Heart right ventricle (tissue), 16 donors: ENCODE measurements at regions of chr16 and their contacts with region 1.

Region 1: GRCh38 chr16:21184834-21185233 is 26.4 kb downstream of the LDAF1 start:
- DNase-seq: no peak
- ATAC-seq: no peak
- H3K4me3 ChIP-seq: no peak overlapping the region
- H3K27ac ChIP-seq: no peak overlapping the region
- H3K4me1 ChIP-seq: peaks cover 0 to 8% (median 0%) of the 10 kb centered on the region in 9 donors
- H3K27me3 ChIP-seq: no peaks in the 10 kb centered on the region
- CTCF ChIP-seq: no peak

Region 2: GRCh38 chr16:20833086-20833485 is 351.7 kb before region 1 on chr16:
- intact Hi-C with region 1: no loop called
- DNase-seq: no peak
- ATAC-seq: peak in 3 of 8 donors; percentile 47 to 73 (median 71)
- H3K4me3 ChIP-seq: no peak overlapping the region
- H3K27ac ChIP-seq: no peak overlapping the region
- H3K4me1 ChIP-seq: peaks cover 0 to 19% (median 0%) of the 10 kb centered on the region in 9 donors
- H3K27me3 ChIP-seq: no peaks in the 10 kb centered on the region
- CTCF ChIP-seq: no peak

Region 3: DNA sequence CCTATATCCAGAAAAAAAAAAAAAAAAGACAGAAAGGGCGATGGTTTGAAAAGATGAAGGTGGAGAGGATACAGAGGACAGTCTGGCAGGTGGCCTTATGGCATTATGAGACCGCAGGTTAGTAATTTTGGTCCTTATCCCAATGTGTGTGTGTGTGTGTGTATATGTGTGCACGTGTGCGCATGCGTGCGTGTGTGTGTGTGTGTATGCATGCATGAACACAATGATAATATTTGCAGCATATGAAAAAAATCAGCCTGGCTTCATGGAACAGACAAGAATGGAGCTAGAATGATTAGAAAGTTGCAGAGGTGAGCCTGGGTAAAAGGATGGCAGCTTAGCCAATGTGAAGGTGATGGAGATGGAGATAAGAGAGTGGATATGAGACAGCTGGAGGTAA is 200.8 kb before region 1 on chr16:
- intact Hi-C with region 1: no loop called
- DNase-seq: no peak
- ATAC-seq: no peak
- H3K4me3 ChIP-seq: no peak overlapping the region
- H3K27ac ChIP-seq: no peak overlapping the region
- H3K4me1 ChIP-seq: no peaks in the 10 kb centered on the region
- H3K27me3 ChIP-seq: no peaks in the 10 kb centered on the region
- CTCF ChIP-seq: no peak

Region 4: GRCh38 chr16:21056396-21056795 is 128.4 kb before region 1 on chr16:
- intact Hi-C with region 1: no loop called
- DNase-seq: no peak
- ATAC-seq: no peak
- H3K4me3 ChIP-seq: no peak overlapping the region
- H3K27ac ChIP-seq: no peak overlapping the region
- H3K4me1 ChIP-seq: no peaks in the 10 kb centered on the region
- H3K27me3 ChIP-seq: peaks cover 0 to 3% (median 0%) of the 10 kb centered on the region in 7 donors
- CTCF ChIP-seq: no peak

Region 5: DNA sequence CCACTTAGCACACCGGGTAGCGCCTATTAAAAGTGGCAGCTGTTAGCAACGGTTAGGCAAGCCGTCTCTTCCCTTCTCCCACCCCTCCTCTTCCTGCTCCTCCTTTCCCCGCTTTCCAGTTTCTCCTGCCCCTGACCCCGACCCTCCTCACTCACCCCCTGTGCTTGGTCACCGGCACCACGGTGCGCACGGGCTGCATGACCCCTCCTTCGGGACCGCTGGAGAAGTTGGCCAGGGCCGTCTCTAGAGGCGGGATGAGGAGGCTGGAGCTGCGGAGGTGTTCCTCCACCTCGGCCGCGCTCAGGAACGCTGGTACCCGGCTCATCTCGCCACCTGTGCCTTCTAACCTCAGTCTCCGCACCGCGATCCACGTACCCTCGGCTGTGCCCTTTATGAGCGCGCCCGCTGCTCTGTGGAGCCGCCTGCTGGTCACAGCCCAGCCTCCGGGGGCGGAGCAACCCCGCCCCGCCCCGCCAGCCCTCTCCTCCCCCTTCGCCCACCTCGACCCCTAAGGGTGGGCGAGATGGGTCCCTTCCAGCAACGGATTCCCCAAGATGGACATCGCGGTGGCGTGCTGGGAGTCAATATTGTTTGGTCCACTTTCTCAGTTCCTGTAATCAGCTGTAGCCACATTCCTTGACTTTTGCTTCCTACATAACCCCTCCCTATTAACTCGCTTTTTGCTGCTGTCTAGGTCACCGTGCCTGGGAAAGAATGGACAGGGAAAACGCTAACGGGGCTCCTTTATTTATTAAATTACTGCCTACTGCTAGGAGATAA is 93.3 kb after region 1 on chr16 and contains the start of gene CRYM:
- intact Hi-C with region 1: loop called in 2 of 10 experiments (anchors 5 to 10 kb)
- DNase-seq: peak; percentile 55 to 75
- ATAC-seq: peak; percentile 91 to 97 (median 96)
- H3K4me3 ChIP-seq: peak within 1 kb of the TSS; percentile 4 to 82 (median 61)
- H3K27ac ChIP-seq: peak within 1 kb of the TSS; percentile 31 to 94 (median 82)
- H3K4me1 ChIP-seq: peaks cover 0 to 30% (median 12%) of the 10 kb centered on the region in 9 donors
- H3K27me3 ChIP-seq: peaks cover 0 to 85% (median 22%) of the 10 kb centered on the region in 7 donors
- CTCF ChIP-seq: peak; percentile 60 to 89 (median 84)
- total RNA-seq, gene CRYM: 31.9 to 265 (median 186) TPM

Region 6: DNA sequence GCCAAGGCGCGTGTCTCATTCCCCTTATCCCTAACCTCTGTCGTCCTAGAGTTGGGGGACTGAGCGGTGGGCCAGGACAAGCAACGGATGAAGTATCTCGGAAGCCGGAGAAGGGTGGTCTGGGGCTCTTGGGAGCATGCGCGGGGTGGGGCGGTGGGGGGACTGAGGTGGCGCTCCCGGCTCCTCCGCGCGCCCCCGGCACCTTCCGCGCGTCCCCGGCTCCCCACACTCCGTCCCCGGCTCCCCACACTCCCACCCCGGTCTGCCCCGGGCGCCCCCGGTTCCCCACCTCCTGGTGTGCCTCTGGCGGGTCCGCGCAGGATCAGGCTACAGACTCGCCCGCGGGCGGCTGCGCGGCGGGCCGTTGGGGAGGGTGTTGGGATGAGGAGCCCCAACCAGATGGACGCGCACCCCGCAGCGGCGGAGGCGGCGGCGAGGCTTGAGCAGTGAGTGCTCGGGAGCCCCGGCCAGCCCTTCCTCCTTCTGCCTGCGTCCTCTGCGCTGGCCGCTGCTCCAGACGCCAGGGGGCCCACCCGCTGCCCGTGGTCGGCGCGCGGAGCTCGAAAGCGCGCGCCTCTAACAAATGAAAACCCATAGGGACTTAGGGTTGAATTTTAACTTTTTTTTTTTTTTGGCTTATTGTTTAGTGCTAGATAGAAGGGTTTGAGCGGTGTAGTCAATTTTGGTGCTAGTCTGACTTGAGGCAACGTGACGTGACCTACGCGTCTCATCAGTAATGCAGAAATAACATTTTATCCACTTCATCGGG is 98.9 kb after region 1 on chr16:
- intact Hi-C with region 1: loop called in 2 of 10 experiments (anchors 5 to 10 kb)
- DNase-seq: peak; percentile 43 to 64
- ATAC-seq: peak; percentile 87 to 97 (median 92)
- H3K4me3 ChIP-seq: peak overlapping the region; percentile 34 to 57 (median 50)
- H3K27ac ChIP-seq: peak overlapping the region; percentile 10 to 84 (median 62)
- H3K4me1 ChIP-seq: peaks cover 0 to 19% (median 6%) of the 10 kb centered on the region in 9 donors
- H3K27me3 ChIP-seq: peaks cover 0 to 90% (median 31%) of the 10 kb centered on the region in 7 donors
- CTCF ChIP-seq: peak in 8 of 9 donors; percentile 17 to 72 (median 54)

Region 7: GRCh38 chr16:21300309-21301167 is 115.7 kb after region 1 on chr16:
- intact Hi-C with region 1: loop called (anchors 1 to 10 kb)
- DNase-seq: peak; percentile 72 to 98
- ATAC-seq: peak; percentile 93 to 99 (median 96)
- H3K4me3 ChIP-seq: peak overlapping the region; percentile 7 to 79 (median 64)
- H3K27ac ChIP-seq: peak overlapping the region; percentile 14 to 87 (median 73)
- H3K4me1 ChIP-seq: peaks cover 0 to 19% (median 7%) of the 10 kb centered on the region in 9 donors
- H3K27me3 ChIP-seq: peaks cover 0 to 22% (median 0%) of the 10 kb centered on the region in 7 donors
- CTCF ChIP-seq: peak; percentile 62 to 97 (median 82)

Region 8: GRCh38 chr16:22321339-22322001 is 1136.6 kb after region 1 on chr16:
- intact Hi-C with region 1: loop called in 1 of 10 experiments (anchors 10 kb)
- DNase-seq: peak; percentile 50 to 59
- ATAC-seq: peak; percentile 39 to 73 (median 66)
- H3K4me3 ChIP-seq: no peak overlapping the region
- H3K27ac ChIP-seq: no peak overlapping the region
- H3K4me1 ChIP-seq: peaks cover 0 to 15% (median 4%) of the 10 kb centered on the region in 9 donors
- H3K27me3 ChIP-seq: no peaks in the 10 kb centered on the region
- CTCF ChIP-seq: peak; percentile 81 to 94 (median 91)